Ovary (tissue), 10 donors: ENCODE measurements at regions of chr19 and their contacts with region 1.

Region 1: DNA sequence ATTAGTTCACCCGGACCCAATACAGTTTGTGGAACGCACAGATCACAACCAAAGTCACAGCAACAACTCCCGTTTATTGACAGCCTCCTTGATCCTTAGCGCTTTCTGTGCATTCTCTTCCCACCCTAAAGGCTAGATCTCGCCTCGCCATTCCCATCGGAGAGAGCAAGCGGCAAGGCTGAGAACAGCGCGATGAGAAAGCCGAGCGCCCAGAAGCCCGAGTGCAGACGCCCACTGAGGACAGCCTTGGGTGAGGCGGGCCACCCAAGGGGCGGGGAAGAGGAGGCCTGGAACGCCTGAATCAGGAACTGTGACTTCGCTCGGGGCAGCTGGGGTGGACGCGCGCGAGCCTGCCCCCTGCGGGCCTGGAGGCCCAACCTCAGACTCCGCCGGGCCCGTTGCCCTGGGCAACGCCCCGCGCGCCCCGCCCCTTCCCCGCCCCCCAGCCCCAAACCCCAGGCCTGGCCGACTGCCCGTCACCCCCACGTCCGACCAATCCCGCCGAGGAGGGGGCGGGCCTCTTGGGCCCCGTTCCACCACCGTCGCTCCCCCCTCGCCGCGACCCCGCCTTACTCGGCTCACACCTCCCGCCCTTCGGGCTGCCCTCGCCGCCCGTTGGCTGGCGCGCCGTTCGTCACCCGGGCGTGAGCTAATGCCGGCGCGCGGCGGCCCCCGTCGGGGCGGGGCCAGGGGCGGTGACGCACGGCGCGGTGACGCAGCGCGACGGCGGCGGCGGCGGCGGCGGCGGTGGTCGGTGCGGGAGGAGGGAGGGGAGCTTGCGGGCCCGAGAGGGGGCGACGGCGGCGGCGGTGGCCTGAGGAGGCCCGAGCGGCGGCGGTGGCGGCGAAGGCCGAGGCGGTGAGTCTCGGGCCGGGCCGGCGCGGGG is at the start of gene SAMD4B:
- DNase-seq: peak; percentile 99 to 100 (median 100)
- H3K4me3 ChIP-seq: peak within 1 kb of the TSS; percentile 93
- H3K27ac ChIP-seq: peak within 1 kb of the TSS; percentile 92 to 95
- H3K4me1 ChIP-seq: peaks cover 4% of the 10 kb centered on the region
- H3K27me3 ChIP-seq: no peaks in the 10 kb centered on the region
- CTCF ChIP-seq: peak; percentile 84 to 94 (median 89)
- EP300 ChIP-seq: peak; percentile 74
- POLR2A ChIP-seq: peak; percentile 78
- total RNA-seq, gene SAMD4B: 59.0 to 139 (median 110) TPM

Region 2: GRCh38 chr19:39125554-39126311 is 216.2 kb before region 1 on chr19 and contains the start of gene PAK4:
- intact Hi-C with region 1: loop called in 1 of 4 experiments (anchors 5 kb)
- DNase-seq: peak; percentile 98 to 99 (median 98)
- H3K4me3 ChIP-seq: peak within 1 kb of the TSS; percentile 86
- H3K27ac ChIP-seq: peak within 1 kb of the TSS; percentile 62 to 78
- H3K4me1 ChIP-seq: peaks cover 10% of the 10 kb centered on the region
- H3K27me3 ChIP-seq: no peaks in the 10 kb centered on the region
- CTCF ChIP-seq: peak in 1 of 3 donors; percentile 9
- EP300 ChIP-seq: no peak
- POLR2A ChIP-seq: peak; percentile 54
- total RNA-seq, gene PAK4: 10.4 to 62.2 (median 35.4) TPM

Region 3: GRCh38 chr19:39264306-39265290 is 77.4 kb before region 1 on chr19:
- intact Hi-C with region 1: no loop called
- DNase-seq: no peak
- H3K4me3 ChIP-seq: no peak overlapping the region
- H3K27ac ChIP-seq: no peak overlapping the region
- H3K4me1 ChIP-seq: peaks cover 2% of the 10 kb centered on the region
- H3K27me3 ChIP-seq: no peaks in the 10 kb centered on the region
- CTCF ChIP-seq: no peak
- EP300 ChIP-seq: no peak
- POLR2A ChIP-seq: no peak

Region 4: DNA sequence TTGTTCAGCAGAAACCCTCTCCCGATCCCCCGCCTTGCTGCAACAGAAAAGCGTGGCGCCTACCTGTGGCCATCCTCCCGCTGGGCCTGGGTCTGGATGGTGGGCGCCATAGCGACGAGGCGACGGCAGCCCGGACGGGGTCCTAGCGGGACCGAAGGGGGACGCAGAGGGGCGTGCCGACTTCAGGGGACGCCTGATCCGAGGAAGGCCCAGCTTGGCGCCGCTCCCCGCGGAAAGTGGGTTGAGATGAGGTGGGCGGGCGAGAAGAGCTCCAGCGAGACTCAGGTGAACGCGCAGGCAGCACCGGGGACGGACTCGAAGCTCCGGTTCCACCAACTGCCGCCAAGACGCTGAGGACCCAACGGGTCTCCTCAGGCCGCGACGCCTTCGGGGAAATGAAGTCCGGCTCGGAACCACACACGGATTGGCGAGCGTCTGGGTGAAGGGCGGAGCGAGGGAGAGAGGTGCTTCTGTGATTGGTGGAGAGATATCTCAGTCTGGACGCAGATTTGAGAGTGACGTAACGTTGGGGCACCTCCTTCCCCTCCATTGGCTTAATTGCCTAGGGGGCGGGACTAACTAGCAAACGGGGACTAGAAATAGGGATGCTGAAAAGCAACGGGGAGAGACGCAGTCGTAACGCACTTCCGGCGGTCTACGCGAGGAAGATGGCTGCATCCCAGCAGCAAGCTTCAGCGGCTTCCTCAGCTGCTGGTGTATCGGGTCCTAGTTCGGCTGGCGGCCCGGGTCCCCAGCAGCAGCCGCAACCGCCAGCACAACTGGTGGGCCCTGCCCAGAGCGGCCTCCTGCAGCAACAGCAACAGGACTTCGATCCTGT is 49.0 kb after region 1 on chr19 and contains the starts of genes MED29 and PAF1:
- intact Hi-C with region 1: loop called in 1 of 4 experiments (anchors 1 kb)
- DNase-seq: peak; percentile 96 to 98 (median 97)
- H3K4me3 ChIP-seq: peak within 1 kb of the TSS; percentile 70
- H3K27ac ChIP-seq: peak within 1 kb of the TSS; percentile 91 to 99
- H3K4me1 ChIP-seq: peaks cover 3% of the 10 kb centered on the region
- H3K27me3 ChIP-seq: no peaks in the 10 kb centered on the region
- CTCF ChIP-seq: peak in 2 of 3 donors; percentile 35 to 53
- EP300 ChIP-seq: peak; percentile 47
- POLR2A ChIP-seq: peak; percentile 73
- total RNA-seq, gene MED29: 27.7 to 62.9 (median 59.9) TPM
- total RNA-seq, gene PAF1: 31.0 to 60.2 (median 47.4) TPM